RWPE1 (cell line): ENCODE measurements at regions of chr11 and their contacts with region 1.

Region 1: DNA sequence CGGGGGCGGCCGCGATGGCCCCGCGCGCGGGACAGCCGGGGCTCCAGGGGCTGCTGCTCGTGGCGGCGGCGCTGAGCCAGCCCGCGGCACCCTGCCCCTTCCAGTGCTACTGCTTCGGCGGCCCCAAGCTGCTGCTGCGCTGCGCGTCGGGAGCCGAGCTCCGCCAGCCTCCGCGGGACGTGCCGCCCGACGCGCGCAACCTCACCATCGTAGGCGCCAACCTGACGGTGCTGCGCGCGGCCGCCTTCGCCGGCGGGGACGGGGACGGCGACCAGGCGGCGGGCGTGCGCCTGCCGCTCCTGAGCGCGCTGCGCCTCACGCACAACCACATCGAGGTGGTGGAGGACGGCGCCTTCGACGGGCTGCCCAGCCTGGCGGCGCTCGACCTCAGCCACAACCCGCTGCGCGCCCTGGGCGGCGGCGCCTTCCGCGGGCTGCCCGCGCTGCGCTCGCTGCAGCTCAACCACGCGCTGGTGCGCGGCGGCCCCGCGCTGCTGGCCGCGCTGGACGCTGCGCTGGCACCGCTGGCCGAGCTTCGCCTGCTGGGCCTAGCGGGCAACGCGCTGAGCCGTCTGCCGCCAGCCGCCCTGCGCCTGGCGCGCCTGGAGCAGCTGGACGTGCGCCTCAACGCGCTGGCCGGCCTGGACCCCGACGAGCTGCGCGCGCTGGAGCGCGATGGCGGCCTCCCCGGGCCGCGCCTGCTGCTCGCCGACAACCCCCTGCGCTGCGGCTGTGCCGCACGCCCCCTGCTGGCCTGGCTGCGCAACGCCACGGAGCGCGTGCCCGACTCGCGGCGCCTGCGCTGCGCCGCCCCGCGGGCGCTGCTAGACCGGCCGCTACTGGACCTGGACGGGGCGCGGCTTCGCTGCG is 697 bp downstream of the TPBGL start:
- DNase-seq: peak; percentile 86
- H3K27ac ChIP-seq: no peak overlapping the region
- CTCF ChIP-seq: peak; percentile 97

Region 2: DNA sequence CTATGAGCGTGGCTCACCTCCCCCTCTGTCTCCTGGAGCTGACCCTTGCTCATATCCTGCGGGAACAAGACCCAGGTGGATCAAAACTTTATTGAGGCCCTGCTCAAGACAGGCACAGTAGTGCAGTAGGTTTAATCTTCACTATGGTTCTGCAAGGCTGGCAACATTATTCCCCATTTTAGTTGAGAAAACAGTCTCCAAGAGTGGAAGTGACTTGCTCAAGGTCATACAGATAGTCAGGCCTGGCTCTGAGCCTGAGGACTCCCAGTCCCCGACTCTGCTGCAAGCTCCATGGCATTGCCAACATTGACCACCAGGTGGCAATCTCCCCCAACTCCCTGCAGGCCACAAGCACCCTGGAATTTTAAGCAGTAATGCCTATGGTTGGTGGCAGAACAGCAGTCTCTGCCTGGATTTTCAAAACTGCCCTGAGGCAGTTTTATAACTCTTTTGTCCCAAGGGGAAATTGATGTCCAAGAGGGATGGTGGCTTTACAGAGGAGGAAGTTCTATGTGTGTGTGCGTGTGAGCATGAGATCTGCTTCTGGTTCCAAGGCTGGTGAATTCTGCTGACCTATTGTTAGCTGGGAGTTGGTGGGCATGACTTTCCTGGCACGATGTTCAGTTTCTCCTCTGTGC is 218.4 kb before region 1 on chr11:
- CTCF ChIA-PET with region 1: interaction called, 18 read pairs
- POLR2A ChIA-PET with region 1: no interaction called
- DNase-seq: peak; percentile 76
- H3K27ac ChIP-seq: no peak overlapping the region
- CTCF ChIP-seq: peak; percentile 93